Gastrocnemius medialis (tissue), 4 donors: ENCODE measurements at regions of chr1 and their contacts with region 1.

Region 1: GRCh38 chr1:179365320-179366092 is at the start of gene AXDND1:
- DNase-seq: peak; percentile 59 to 62
- ATAC-seq: peak; percentile 88 to 92
- H3K4me3 ChIP-seq: peak within 1 kb of the TSS; percentile 59 to 70 (median 61)
- H3K27ac ChIP-seq: peak within 1 kb of the TSS; percentile 66 to 79 (median 77)
- H3K4me1 ChIP-seq: peaks cover 0 to 6% of the 10 kb centered on the region in 2 donors
- H3K27me3 ChIP-seq: no peaks in the 10 kb centered on the region
- CTCF ChIP-seq: no peak
- POLR2A ChIP-seq: peak in 1 of 2 donors; percentile 14
- total RNA-seq, gene AXDND1: not detected

Region 2: DNA sequence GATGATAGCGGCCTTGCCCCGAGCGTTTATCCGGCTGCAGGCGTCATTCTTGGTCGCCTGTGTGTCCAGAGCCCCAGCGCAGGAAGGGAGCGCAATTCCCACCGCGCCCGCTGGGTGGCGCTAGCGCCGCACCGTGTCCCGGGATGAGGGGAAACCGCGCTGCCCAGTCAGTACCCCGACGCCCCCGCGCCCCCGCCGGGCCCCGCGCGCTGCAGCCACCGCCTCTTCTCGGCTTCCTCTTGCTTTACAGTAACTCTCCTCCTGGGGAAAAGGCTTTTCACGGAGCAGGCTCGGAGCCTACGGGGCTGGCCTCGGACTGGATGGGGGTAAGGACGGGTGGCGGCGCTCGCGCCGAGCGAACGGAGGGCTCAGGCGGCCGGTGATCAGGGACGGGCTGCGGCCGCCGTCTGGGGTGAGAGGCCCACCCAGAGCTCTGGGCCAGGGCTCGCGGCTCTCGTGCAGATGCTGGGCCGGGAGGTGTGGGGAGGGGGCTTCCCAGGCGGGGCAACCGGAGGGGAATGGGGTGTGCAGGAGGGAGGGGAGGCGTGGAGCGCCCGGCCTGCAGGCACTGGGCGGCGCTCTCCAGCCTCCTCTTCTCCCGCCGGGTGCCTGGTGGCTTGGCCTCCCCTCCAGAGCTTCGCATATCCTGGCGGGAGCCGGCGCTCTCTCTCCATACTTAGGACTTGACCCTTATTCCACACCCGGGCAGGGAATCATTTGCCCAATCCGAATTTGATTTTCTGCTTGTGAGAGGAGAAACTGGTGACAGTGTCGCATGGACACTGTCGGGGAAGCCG is 822.7 kb before region 1 on chr1:
- in situ Hi-C with region 1: loop called in 2 of 4 experiments (anchors 25 kb)
- intact Hi-C with region 1: no loop called
- DNase-seq: peak; percentile 53 to 73
- ATAC-seq: peak; percentile 76 to 89
- H3K4me3 ChIP-seq: peak overlapping the region; percentile 60 to 70 (median 64)
- H3K27ac ChIP-seq: peak overlapping the region; percentile 34 to 60 (median 54)
- H3K4me1 ChIP-seq: peaks cover 18 to 31% of the 10 kb centered on the region in 2 donors
- H3K27me3 ChIP-seq: no peaks in the 10 kb centered on the region
- CTCF ChIP-seq: peak; percentile 87 to 99 (median 96)
- POLR2A ChIP-seq: no peak

Region 3: GRCh38 chr1:179081687-179082332 is 283.7 kb before region 1 on chr1 and contains the start of gene TOR3A:
- in situ Hi-C with region 1: loop called (anchors 5 to 10 kb)
- intact Hi-C with region 1: loop called (anchors 1 kb)
- DNase-seq: peak; percentile 95 to 97
- ATAC-seq: peak; percentile 85 to 88
- H3K4me3 ChIP-seq: peak within 1 kb of the TSS; percentile 81 to 98 (median 87)
- H3K27ac ChIP-seq: peak within 1 kb of the TSS; percentile 93 to 97 (median 96)
- H3K4me1 ChIP-seq: peaks cover 17 to 18% of the 10 kb centered on the region in 2 donors
- H3K27me3 ChIP-seq: no peaks in the 10 kb centered on the region
- CTCF ChIP-seq: no peak
- POLR2A ChIP-seq: peak; percentile 95 to 97
- total RNA-seq, gene TOR3A: 19.2 to 78.6 (median 29.0) TPM

Region 4: GRCh38 chr1:179229214-179230140 is 136.0 kb before region 1 on chr1 and contains the start of gene ABL2:
- in situ Hi-C with region 1: loop called in 1 of 4 experiments (anchors 25 kb)
- intact Hi-C with region 1: no loop called
- DNase-seq: no peak
- ATAC-seq: peak; percentile 71 to 75
- H3K4me3 ChIP-seq: peak within 1 kb of the TSS; percentile 77 to 99 (median 90)
- H3K27ac ChIP-seq: peak within 1 kb of the TSS; percentile 75 to 89 (median 82)
- H3K4me1 ChIP-seq: peaks cover 9 to 10% of the 10 kb centered on the region in 2 donors
- H3K27me3 ChIP-seq: no peaks in the 10 kb centered on the region
- CTCF ChIP-seq: no peak
- POLR2A ChIP-seq: peak in 1 of 2 donors; percentile 10
- total RNA-seq, gene ABL2: 4.4 to 9.3 (median 5.8) TPM

Region 5: DNA sequence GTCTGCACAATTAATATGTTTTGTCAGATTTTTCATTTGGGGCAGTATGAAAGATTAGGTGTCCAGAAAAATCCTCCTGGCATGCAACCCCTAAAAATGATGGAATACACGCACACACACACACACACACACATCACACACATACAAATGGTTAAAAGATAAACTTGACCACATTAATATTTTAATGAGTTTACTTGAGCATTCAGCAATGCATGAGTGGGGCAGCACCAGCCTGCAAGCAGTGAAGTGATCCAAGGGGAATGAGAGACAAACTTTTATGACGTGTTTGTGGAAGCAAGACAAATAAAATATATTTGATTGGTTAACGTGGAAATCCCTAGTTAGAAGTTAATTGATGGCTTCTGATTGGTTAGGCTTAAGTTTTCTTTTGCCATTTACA is 101.0 kb before region 1 on chr1:
- in situ Hi-C with region 1: loop called in 1 of 4 experiments (anchors 10 kb)
- intact Hi-C with region 1: no loop called
- DNase-seq: no peak
- ATAC-seq: no peak
- H3K4me3 ChIP-seq: no peak overlapping the region
- H3K27ac ChIP-seq: no peak overlapping the region
- H3K4me1 ChIP-seq: no peaks in the 10 kb centered on the region
- H3K27me3 ChIP-seq: no peaks in the 10 kb centered on the region
- CTCF ChIP-seq: no peak
- POLR2A ChIP-seq: no peak

Region 6: GRCh38 chr1:179529482-179530195 is 164.1 kb after region 1 on chr1:
- in situ Hi-C with region 1: no loop called
- intact Hi-C with region 1: no loop called
- DNase-seq: no peak
- ATAC-seq: no peak
- H3K4me3 ChIP-seq: no peak overlapping the region
- H3K27ac ChIP-seq: no peak overlapping the region
- H3K4me1 ChIP-seq: no peaks in the 10 kb centered on the region
- H3K27me3 ChIP-seq: no peaks in the 10 kb centered on the region
- CTCF ChIP-seq: no peak
- POLR2A ChIP-seq: no peak